ENCODE measurements at regions of chr3 and their contacts with region 1.

Region 1: DNA sequence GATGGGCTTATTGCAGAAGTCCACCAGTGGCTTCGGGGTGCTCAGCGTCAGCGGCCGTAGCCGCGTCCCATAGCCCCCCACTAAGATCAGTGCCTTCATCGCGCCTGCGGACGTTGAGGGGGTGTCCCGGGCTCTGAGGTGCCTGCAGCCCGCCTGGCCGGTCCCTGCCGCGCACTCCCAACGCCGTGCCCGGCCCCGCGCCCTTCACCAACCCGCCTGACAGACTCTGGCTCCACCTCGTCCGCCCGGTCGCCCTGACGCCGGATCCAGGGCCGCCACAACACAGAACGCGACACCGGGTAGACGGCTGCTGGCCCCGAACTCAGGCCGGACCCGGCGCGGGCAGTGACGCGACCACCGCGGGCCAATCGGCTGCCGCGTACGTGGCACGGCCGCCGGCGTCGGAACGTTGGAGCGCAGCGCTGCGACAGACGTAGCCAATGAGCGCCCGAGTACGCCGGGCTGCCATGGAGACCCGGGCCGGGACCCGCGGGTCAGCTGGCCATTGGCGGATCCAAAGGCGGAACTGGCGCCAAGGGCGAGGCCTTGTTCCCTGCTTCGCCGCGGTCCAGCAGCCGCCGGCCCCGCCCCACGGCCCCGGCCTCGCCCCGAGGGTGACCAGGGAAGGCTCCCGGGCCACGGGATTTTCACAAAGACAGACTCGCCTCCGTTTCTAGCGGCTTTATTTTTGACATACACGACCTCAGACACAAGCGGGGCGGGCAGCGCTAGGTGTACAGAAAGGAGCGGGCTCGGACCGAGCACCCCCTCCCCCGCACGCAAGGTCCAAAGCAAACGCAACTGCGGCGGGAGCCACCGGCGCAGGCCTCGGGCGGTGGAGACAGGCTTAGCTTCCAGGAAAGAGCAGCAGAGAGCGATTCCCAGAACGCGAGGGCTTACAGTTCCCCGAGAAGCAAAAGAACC is at the start of gene GMPPB:
- DNase-seq: peak; percentile 96 to 98
- ATAC-seq: peak; percentile 82
- H3K4me3 ChIP-seq: peak within 1 kb of the TSS; percentile 79 to 99 (median 92)
- H3K27ac ChIP-seq: peak within 1 kb of the TSS; percentile 88 to 100 (median 96)
- H3K4me1 ChIP-seq: peaks cover 27 to 38% of the 10 kb centered on the region in 2 donors
- H3K27me3 ChIP-seq: no peaks in the 10 kb centered on the region
- CTCF ChIP-seq: no peak
- POLR2A ChIP-seq: peak; percentile 78 to 83
- total RNA-seq, gene GMPPB: 14.2 to 26.1 (median 17.0) TPM

Region 2: DNA sequence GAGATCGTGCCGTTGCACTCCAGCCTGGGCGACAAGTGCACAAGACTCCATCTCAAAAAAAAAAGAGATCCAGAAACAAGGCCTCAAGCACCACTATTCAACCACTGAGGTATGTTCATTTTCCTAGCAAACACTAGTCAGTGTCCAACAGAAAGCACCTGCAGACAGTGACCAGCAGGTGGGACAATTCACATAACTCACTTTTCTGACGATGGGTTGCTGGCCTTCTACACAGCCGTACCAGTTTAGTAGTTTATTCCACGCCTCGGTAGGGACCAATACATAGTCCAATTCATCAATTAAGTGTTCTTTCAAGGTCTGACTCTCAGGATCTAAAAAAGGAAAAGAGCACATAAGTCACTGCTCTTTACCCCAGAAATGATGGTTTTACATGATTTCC is 396.4 kb before region 1 on chr3:
- in situ Hi-C with region 1: no loop called
- intact Hi-C with region 1: no loop called
- DNase-seq: no peak
- ATAC-seq: no peak
- H3K4me3 ChIP-seq: no peak overlapping the region
- H3K27ac ChIP-seq: no peak overlapping the region
- H3K4me1 ChIP-seq: no peaks in the 10 kb centered on the region
- H3K27me3 ChIP-seq: no peaks in the 10 kb centered on the region
- CTCF ChIP-seq: no peak
- POLR2A ChIP-seq: no peak

Region 3: DNA sequence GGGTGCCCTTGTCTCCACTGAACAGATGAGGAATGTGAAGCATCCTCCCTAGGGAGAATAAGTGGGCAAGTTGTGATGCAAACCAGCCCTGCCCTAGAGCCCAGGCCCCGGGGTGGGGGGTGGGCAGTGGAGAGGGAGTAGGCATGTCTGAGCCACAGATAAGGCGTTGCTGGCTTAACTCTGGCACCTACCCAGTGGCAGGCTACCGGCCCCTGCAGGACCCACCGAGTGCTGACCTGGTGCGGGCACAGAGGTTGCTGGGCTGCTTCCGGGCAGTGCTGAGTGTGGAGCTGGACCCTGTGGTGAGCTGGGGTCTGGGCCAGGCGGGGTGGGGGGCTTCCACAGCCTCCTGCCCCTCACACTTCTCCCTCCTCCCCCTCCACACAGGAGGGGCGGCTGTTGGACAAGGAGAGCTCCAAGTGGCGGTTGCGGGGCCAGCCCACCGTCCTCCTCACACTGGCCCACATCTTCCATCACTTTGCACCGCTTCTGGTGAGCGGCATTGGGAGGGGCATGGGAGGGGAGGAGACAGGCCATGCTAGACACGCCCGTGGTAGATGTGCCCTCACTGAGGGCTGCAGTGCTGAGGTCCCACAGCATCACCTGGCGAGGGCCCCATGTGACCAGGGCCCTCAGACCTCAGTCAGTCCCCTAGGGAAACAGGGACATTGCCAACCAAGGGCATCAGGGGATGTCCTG is 24.5 kb before region 1 on chr3:
- in situ Hi-C with region 1: no loop called
- intact Hi-C with region 1: no loop called
- DNase-seq: no peak
- ATAC-seq: no peak
- H3K4me3 ChIP-seq: no peak overlapping the region
- H3K27ac ChIP-seq: peak overlapping the region in 2 of 4 donors; percentile 98 to 99
- H3K4me1 ChIP-seq: peaks cover 8 to 23% of the 10 kb centered on the region in 2 donors
- H3K27me3 ChIP-seq: no peaks in the 10 kb centered on the region
- CTCF ChIP-seq: no peak
- POLR2A ChIP-seq: no peak

Region 4: GRCh38 chr3:49786241-49786958 is 62.5 kb after region 1 on chr3 and contains the start of gene IP6K1:
- in situ Hi-C with region 1: no loop called
- intact Hi-C with region 1: loop called (anchors 2 kb)
- DNase-seq: peak; percentile 100
- ATAC-seq: peak; percentile 99 to 100
- H3K4me3 ChIP-seq: peak within 1 kb of the TSS; percentile 77 to 93 (median 86)
- H3K27ac ChIP-seq: peak within 1 kb of the TSS; percentile 90 to 97 (median 94)
- H3K4me1 ChIP-seq: peaks cover 10 to 21% of the 10 kb centered on the region in 2 donors
- H3K27me3 ChIP-seq: no peaks in the 10 kb centered on the region
- CTCF ChIP-seq: no peak
- POLR2A ChIP-seq: peak; percentile 60 to 79
- total RNA-seq, gene IP6K1: 13.5 to 22.2 (median 19.5) TPM

Region 5: DNA sequence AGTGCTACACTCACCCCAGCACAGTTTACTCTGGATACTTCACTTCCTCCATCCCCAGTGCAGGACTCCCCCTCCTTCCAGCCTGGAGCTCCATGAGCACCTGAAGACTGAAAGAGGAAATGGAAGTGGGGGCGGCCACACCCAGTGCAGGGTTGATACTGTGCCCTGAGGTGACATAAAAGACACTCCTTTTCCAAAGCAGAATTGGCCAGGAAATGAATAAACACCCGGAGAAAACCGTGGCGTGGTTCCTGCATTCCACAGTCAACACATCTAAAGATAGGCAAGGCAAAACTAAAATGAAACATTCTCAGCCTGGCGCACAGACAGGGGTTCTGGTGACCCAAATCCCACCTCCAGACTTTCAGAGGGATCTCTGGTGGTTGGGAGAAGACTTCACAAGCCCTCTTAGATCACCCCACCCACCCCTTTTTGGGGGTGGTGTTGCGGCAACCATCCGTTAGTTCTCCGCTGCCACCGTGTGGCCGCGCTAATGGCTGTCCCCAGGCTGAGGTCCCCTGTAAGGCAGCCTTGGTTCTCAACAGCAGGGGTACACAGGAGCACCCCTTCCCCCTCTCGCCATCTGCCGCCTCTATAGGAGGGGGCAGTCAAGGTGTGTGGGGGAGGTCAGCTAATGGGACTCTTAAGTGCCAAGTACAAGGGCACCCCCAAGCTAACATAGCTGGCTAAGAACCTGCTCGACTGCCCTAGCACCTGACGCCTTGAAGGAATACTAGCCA is 182.3 kb after region 1 on chr3:
- in situ Hi-C with region 1: no loop called
- intact Hi-C with region 1: no loop called
- DNase-seq: no peak
- ATAC-seq: peak in 1 of 2 donors; percentile 40
- H3K4me3 ChIP-seq: peak overlapping the region in 3 of 4 donors; percentile 23 to 50 (median 34)
- H3K27ac ChIP-seq: peak overlapping the region; percentile 18 to 59 (median 31)
- H3K4me1 ChIP-seq: peaks cover 4 to 11% of the 10 kb centered on the region in 2 donors
- H3K27me3 ChIP-seq: no peaks in the 10 kb centered on the region
- CTCF ChIP-seq: peak; percentile 31 to 66 (median 55)
- POLR2A ChIP-seq: no peak